ENCODE measurements at regions of chr15 and their contacts with region 1.

Region 1: GRCh38 chr15:45402162-45402954 is 24.0 kb upstream of the GATM start:
- DNase-seq: peak; percentile 97
- H3K4me3 ChIP-seq: peak overlapping the region; percentile 94
- H3K27ac ChIP-seq: peak overlapping the region; percentile 89
- H3K4me1 ChIP-seq: peaks cover 5% of the 10 kb centered on the region
- H3K27me3 ChIP-seq: no peaks in the 10 kb centered on the region
- CTCF ChIP-seq: no peak

Region 2: GRCh38 chr15:45166834-45167630 is 235.3 kb before region 1 on chr15:
- intact Hi-C with region 1: loop called (anchors 10 kb)
- DNase-seq: peak; percentile 86
- H3K4me3 ChIP-seq: peak overlapping the region; percentile 65
- H3K27ac ChIP-seq: peak overlapping the region; percentile 97
- H3K4me1 ChIP-seq: no peaks in the 10 kb centered on the region
- H3K27me3 ChIP-seq: no peaks in the 10 kb centered on the region
- CTCF ChIP-seq: peak; percentile 57

Region 3: DNA sequence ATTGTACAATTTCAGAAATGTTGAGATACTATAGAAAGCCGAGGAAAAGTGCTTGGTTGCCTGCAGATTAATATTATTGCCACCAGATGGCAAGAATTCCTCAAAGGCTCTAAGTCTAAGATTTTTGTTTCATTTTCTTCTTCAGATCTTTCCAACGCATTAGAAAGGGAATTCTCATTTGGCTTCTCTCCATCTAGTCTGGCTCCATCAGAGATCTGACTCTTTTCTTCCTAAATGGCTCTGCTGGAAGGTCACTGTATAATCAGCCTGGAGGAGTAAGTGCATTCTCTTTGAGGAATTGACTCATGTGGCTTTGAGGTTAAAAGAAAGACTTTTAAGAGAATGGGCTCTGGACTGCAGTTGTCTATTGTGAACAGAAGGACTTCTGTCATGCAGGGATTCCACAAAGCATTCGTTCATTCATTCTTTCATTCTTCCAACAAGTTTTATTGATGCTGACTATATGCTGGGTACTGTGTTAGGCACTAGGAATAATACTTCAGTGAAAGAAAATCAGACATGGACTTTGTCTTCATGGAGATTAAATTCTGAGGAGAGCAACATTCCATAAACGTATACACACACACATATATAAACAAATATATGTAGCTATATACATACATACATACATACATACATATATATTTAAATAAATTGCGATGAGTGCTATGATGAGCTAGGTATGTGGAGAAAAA is 95.0 kb before region 1 on chr15:
- intact Hi-C with region 1: loop called (anchors 5 kb)
- DNase-seq: no peak
- H3K4me3 ChIP-seq: no peak overlapping the region
- H3K27ac ChIP-seq: peak overlapping the region; percentile 5
- H3K4me1 ChIP-seq: peaks cover 3% of the 10 kb centered on the region
- H3K27me3 ChIP-seq: no peaks in the 10 kb centered on the region
- CTCF ChIP-seq: peak; percentile 36